CD4-positive, alpha-beta T cell (primary cell): ENCODE measurements at regions of chr7 and their contacts with region 1.

Region 1: GRCh38 chr7:158811461-158811860 is 17.8 kb downstream of the ESYT2 start:
- DNase-seq: peak in 7 of 14 experiments; percentile 33 to 66 (median 49)
- ATAC-seq: peak; percentile 13
- H3K4me3 ChIP-seq: no peak overlapping the region
- H3K4me3 Mint-ChIP-seq: peak overlapping the region; percentile 81
- H3K27ac ChIP-seq: peak overlapping the region; percentile 72 to 86
- H3K27ac Mint-ChIP-seq: peak overlapping the region; percentile 97
- H3K4me1 ChIP-seq: peaks cover 78% of the 10 kb centered on the region
- H3K4me1 Mint-ChIP-seq: peaks cover 94% of the 10 kb centered on the region
- H3K27me3 ChIP-seq: no peaks in the 10 kb centered on the region
- H3K27me3 Mint-ChIP-seq: no peaks in the 10 kb centered on the region
- CTCF ChIP-seq: no peak

Region 2: DNA sequence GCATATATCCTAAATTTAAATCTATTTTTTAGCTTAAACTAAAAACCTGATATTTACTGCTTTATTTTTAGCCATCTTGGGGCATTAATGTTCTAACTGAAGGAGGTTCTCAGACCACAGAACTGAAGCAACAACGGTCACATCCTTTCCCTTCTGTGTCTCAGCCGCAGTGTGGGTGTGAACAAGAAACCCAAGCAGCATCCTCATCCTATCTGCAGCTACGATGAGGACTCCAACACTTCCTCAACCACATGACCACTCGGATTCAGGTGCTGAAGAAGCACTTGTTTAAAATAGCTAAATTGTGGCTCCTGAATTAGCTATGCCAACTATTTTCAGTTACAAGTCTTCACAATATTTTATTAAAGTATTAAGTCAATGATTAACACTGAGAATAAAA is 12.6 kb after region 1 on chr7:
- CTCF ChIA-PET with region 1: interaction called, 6 read pairs
- POLR2A ChIA-PET with region 1: interaction called, 256 read pairs
- intact Hi-C with region 1: loop called (anchors 1 to 2 kb)
- DNase-seq: peak in 10 of 14 experiments; percentile 41 to 95 (median 58)
- ATAC-seq: peak; percentile 75
- H3K4me3 ChIP-seq: no peak overlapping the region
- H3K4me3 Mint-ChIP-seq: peak overlapping the region; percentile 84
- H3K27ac ChIP-seq: peak overlapping the region in 1 of 2 donors; percentile 53
- H3K27ac Mint-ChIP-seq: peak overlapping the region; percentile 90
- H3K4me1 ChIP-seq: peaks cover 59% of the 10 kb centered on the region
- H3K4me1 Mint-ChIP-seq: peaks cover 70% of the 10 kb centered on the region
- H3K27me3 ChIP-seq: no peaks in the 10 kb centered on the region
- H3K27me3 Mint-ChIP-seq: no peaks in the 10 kb centered on the region
- CTCF ChIP-seq: no peak